K562 (cell line): ENCODE measurements at regions of chr9 and their contacts with region 1.

Region 1: GRCh38 chr9:130997925-130998596 is 10.9 kb upstream of the LAMC3 start:
- DNase-seq: peak; percentile 66 to 100 (median 100)
- ATAC-seq: peak; percentile 94
- H3K4me3 ChIP-seq: no peak overlapping the region
- H3K27ac ChIP-seq: no peak overlapping the region
- H3K4me1 ChIP-seq: peaks cover 0 to 24% of the 10 kb centered on the region in 2 experiments; a peak in 3 of 5 replicates
- H3K27me3 ChIP-seq: peaks cover 71 to 97% of the 10 kb centered on the region in 2 experiments
- CTCF ChIP-seq: no peak
- EP300 ChIP-seq: no peak
- POLR2A ChIP-seq: no peak
- RAD21 ChIP-seq: no peak

Region 2: DNA sequence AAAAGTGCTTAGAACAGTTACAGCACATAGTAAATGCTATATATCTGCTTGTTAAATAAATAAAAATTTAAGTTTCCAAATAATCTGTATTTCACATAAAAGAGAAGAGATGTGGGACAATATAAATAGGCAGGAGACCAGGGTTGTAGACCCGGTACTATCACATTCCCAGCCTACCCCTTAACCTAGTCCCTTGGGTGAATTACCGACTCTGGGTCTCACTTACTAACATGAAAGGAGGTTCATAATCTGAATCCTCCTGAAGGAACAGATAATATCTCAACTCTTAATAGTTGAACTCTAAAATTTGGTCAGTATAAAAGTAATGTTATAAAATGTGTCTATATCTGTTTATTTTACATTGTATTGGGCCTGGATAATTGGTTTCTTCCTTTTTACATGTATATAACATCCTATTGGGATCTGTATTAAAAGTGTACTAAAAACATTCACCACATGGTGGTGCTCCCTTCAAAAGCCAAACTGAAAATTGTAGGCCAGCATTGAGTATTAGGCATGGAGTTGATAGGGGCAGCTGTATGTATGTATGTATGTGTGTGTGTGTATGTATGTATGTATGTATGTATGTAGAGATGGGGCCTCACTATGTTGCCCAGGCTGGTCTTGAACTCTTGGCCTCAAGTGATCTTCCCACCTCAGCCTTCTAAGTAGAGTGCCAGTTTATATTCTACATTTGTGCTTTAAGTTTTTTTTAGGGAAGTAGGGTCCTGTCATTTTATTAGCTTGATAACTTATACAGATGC is 227.2 kb before region 1 on chr9:
- CTCF ChIA-PET with region 1: interaction called, 7 read pairs
- POLR2A ChIA-PET with region 1: no interaction called
- in situ Hi-C with region 1: no loop called
- intact Hi-C with region 1: loop called (anchors 1 kb)
- DNase-seq: peak; percentile 91 to 98 (median 95)
- ATAC-seq: peak; percentile 89
- H3K4me3 ChIP-seq: no peak overlapping the region
- H3K27ac ChIP-seq: no peak overlapping the region
- H3K4me1 ChIP-seq: peaks cover 6 to 8% of the 10 kb centered on the region in 2 experiments; a peak in 4 of 5 replicates
- H3K27me3 ChIP-seq: no peaks in the 10 kb centered on the region
- CTCF ChIP-seq: no peak
- EP300 ChIP-seq: no peak
- POLR2A ChIP-seq: no peak
- RAD21 ChIP-seq: no peak

Region 3: DNA sequence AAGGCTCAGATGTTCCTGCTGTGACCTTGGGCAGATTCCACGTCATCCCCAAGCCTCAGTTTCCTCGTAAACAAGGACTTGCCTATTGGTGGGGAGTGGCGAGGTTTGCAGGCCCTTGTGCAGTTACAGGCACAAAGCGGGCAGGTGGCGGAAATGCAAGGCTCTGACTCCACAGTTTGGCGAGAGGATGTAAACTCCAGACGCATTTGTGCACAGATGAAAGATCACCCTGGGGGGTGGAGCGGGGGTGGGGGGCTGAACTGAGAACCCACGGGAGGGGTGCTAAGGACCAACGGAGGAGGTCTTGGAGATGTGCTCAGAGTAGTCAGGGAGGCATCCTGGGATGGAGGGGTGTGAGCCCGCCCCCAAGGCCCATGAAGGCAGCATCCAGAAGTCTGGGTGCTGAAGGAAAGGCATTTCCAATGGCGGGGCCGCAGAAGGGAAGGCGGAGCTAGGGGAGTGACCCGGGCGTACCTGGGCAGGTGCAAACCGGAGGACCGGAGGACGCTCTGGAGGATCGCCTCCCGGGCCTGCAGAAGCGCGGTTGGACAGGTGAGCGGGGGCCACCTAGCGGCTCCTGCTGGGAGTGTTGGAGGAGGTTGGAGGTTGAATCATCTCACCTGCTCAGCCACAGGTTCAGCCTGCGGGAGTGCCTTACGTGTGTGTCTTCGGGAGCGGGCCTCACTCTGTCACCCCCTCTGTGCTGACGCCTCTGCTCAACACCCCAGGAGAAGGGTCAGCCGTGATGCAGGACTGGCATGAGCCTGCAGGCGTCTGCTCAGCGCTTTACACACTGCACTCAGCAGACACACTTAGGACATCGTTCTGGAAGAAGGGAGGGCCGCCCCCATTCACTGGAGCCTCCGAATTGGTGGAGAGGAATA is 57.1 kb before region 1 on chr9:
- CTCF ChIA-PET with region 1: interaction called, 4 read pairs
- POLR2A ChIA-PET with region 1: interaction called, 4 read pairs
- in situ Hi-C with region 1: no loop called
- intact Hi-C with region 1: loop called (anchors 2 kb)
- DNase-seq: peak; percentile 63 to 100 (median 96)
- ATAC-seq: peak; percentile 89
- H3K4me3 ChIP-seq: no peak overlapping the region
- H3K27ac ChIP-seq: no peak overlapping the region
- H3K4me1 ChIP-seq: peaks cover 0 to 42% of the 10 kb centered on the region in 2 experiments; a peak in 3 of 5 replicates
- H3K27me3 ChIP-seq: peaks cover 55 to 84% of the 10 kb centered on the region in 2 experiments
- CTCF ChIP-seq: no peak
- EP300 ChIP-seq: no peak
- POLR2A ChIP-seq: no peak
- RAD21 ChIP-seq: no peak

Region 4: GRCh38 chr9:131008909-131009618 is 11.0 kb after region 1 on chr9 and contains the start of gene LAMC3:
- CTCF ChIA-PET with region 1: interaction called, 3 read pairs
- POLR2A ChIA-PET with region 1: interaction called, 103 read pairs
- in situ Hi-C with region 1: no loop called
- intact Hi-C with region 1: no loop called
- DNase-seq: peak; percentile 56 to 67 (median 60)
- ATAC-seq: peak; percentile 23
- H3K4me3 ChIP-seq: no peak within 1 kb of the TSS
- H3K27ac ChIP-seq: no peak within 1 kb of the TSS
- H3K4me1 ChIP-seq: peaks cover 7 to 24% of the 10 kb centered on the region in 2 experiments; a peak in 3 of 5 replicates
- H3K27me3 ChIP-seq: peaks cover 72 to 86% of the 10 kb centered on the region in 2 experiments
- CTCF ChIP-seq: no peak
- EP300 ChIP-seq: no peak
- POLR2A ChIP-seq: no peak
- RAD21 ChIP-seq: no peak
- polyA plus RNA-seq, gene LAMC3: not detected

Region 5: DNA sequence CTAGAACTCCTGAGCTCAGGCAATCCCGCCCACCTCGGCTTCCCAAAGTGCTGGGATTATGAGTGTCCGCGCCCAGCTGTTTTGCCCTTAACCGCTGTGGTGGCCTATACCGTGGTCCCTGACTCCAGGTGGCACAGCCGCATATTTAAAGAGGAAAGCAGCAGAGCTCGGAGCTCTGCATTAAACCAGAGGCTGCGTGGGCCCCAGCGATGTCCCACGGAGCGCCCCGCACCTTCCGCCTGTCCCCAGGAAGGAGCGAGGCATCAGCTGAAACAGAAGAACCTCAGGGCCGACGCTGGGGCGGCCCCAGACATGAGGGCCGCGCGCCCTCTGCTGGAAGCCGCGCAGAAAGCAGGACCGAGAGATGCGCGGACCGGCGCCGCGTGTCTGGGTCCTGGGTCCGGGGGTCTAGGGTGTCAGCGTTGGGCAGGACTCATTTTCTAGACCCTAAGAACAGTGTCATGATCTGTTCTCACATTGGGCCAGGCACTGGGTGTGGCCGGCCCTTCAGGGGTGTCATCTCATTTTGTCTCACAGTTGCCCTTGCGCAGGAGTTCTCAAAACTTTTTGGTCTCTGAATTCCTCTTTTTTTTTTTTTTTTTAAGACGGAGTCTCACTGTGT is 48.6 kb after region 1 on chr9:
- CTCF ChIA-PET with region 1: interaction called, 11 read pairs
- POLR2A ChIA-PET with region 1: interaction called, 8 read pairs
- in situ Hi-C with region 1: no loop called
- intact Hi-C with region 1: loop called (anchors 1 kb)
- DNase-seq: peak in 3 of 4 experiments; percentile 99 to 100 (median 99)
- ATAC-seq: peak; percentile 93
- H3K4me3 ChIP-seq: no peak overlapping the region
- H3K27ac ChIP-seq: no peak overlapping the region
- H3K4me1 ChIP-seq: peaks cover 0 to 23% of the 10 kb centered on the region in 2 experiments; a peak in 3 of 5 replicates
- H3K27me3 ChIP-seq: peaks cover 55 to 73% of the 10 kb centered on the region in 2 experiments
- CTCF ChIP-seq: no peak
- EP300 ChIP-seq: no peak
- POLR2A ChIP-seq: no peak
- RAD21 ChIP-seq: no peak